Heart left ventricle (tissue), 16 donors: ENCODE measurements at regions of chr1 and their contacts with region 1.

Region 1: DNA sequence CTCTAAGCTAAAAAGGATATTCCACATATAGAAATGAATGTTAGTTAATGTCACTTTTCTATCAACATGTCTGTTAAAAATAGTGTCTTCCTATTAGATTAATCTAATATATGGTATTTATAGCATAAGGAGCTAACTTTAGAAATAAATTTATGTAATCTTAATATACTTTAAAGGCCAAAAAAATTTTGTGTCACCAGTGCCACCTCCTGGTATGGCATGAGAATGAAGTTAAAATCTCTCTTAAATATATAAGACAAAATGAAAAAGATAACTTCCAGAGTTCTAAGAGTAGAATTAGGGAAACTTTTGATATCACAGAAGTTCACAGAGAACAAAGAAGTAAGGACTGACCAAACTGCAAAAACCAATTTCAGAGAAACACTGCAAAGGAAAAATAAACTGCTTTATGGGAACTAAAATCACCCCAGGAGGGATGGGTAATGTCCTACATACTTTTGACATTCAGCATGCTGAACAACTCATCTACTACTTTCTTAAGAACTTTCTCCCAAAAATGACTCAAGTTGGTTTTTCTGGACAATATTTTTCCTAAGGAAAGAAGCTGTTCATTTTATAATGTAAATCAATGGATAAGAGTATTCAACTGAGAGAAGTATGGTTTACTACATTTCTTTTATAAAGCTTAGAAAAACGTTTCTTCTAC is 82.8 kb downstream of the TRIM33 start:
- DNase-seq: no peak
- ATAC-seq: no peak
- H3K4me3 ChIP-seq: no peak overlapping the region
- H3K27ac ChIP-seq: peak overlapping the region in 5 of 12 donors; percentile 7 to 17 (median 11)
- H3K4me1 ChIP-seq: peaks cover 0 to 24% (median 2%) of the 10 kb centered on the region in 12 donors
- H3K27me3 ChIP-seq: no peaks in the 10 kb centered on the region
- CTCF ChIP-seq: peak; percentile 12 to 59 (median 42)
- POLR2A ChIP-seq: no peak

Region 2: DNA sequence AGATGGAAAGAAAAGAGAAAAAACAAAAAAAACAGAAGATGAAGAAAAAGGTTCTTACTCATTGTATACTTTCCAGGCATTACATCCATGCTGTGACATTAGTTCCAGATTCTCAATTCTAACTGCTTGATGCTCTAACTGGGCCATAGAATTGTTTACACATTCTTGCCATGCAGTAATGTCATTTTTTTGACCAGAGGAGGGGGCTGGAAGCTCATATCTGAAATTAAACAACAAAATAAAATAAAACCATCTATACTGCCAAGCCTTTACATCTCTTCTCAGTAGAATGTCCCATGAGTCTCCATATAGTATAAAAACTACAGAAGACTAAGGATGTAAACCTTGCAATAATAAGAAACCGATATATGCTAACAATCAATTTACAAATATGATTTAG is 147.3 kb after region 1 on chr1:
- intact Hi-C with region 1: loop called in 2 of 10 experiments (anchors 10 kb)
- DNase-seq: no peak
- ATAC-seq: no peak
- H3K4me3 ChIP-seq: no peak overlapping the region
- H3K27ac ChIP-seq: no peak overlapping the region
- H3K4me1 ChIP-seq: peaks cover 0 to 25% (median 13%) of the 10 kb centered on the region in 12 donors
- H3K27me3 ChIP-seq: no peaks in the 10 kb centered on the region
- CTCF ChIP-seq: no peak
- POLR2A ChIP-seq: no peak